ENCODE measurements at regions of chr14 and their contacts with region 1.

Region 1: DNA sequence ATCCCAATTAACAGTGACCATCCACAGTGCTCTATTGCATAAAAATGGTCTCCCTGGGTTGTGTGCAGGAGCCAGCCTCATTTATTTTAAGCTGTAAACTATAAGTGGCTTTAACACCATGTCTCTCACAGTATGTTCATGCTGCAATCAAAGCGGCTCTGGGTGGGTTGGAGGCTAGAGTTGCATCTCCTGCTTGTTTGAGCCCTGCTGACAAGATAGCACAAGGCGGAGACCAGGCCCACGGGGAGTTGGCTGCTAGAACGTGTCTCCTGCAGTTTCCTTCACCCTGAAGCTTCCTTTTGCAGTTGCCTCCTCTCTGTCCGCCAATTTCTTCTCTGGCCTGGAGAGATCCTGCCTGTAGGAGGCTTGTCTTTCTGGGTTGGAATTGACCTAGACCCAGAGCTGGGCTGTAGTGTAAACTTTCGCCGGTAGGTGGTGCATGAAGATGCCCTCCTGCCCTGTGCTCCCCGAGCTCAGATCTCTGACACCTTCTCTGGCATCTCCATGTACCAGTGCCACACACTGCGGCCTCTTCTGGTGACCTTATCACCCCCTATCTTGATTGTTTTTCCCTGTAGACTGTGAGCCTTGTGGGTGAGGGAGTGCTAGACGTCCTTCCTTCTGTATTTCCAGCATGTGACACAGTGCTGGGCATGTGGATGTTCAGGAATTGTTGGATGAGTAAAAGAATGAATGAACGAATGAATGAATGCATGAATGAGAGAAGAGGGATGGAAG is 10.3 kb downstream of the OTUB2 start:
- DNase-seq: peak; percentile 81

Region 2: GRCh38 chr14:94021541-94022157 is 14.8 kb before region 1 on chr14:
- CTCF ChIA-PET with region 1: interaction called, 11 read pairs
- POLR2A ChIA-PET with region 1: interaction called, 4 read pairs
- DNase-seq: no peak

Region 3: GRCh38 chr14:94136575-94137331 is 100.3 kb after region 1 on chr14:
- CTCF ChIA-PET with region 1: interaction called, 41 read pairs
- POLR2A ChIA-PET with region 1: interaction called, 3 read pairs
- DNase-seq: peak; percentile 81